Activated CD4-positive, alpha-beta T cell treated with anti-CD3 and anti-CD28 coated beads, Interleukin-2, amount 10 ng/mL, durations not matched to agents 24 days and 14 days (primary cell): ENCODE measurements at regions of chr19 and their contacts with region 1.

Region 1: GRCh38 chr19:34336781-34337271 is 28.2 kb upstream of the GPI start:
- DNase-seq: peak; percentile 82
- H3K4me3 Mint-ChIP-seq: no peak overlapping the region
- H3K27ac Mint-ChIP-seq: peak overlapping the region; percentile 16
- H3K4me1 Mint-ChIP-seq: peaks cover 3% of the 10 kb centered on the region
- H3K27me3 Mint-ChIP-seq: no peaks in the 10 kb centered on the region

Region 2: GRCh38 chr19:34253699-34254551 is 82.9 kb before region 1 on chr19:
- intact Hi-C with region 1: loop called (anchors 2 kb)
- DNase-seq: peak; percentile 97
- H3K4me3 Mint-ChIP-seq: peak overlapping the region; percentile 93
- H3K27ac Mint-ChIP-seq: peak overlapping the region; percentile 95
- H3K4me1 Mint-ChIP-seq: peaks cover 8% of the 10 kb centered on the region
- H3K27me3 Mint-ChIP-seq: no peaks in the 10 kb centered on the region